Psoas muscle (tissue), 8 donors: ENCODE measurements at regions of chr3 and their contacts with region 1.

Region 1: GRCh38 chr3:187738331-187739093 is 6.8 kb downstream of the BCL6 start:
- DNase-seq: peak; percentile 85 to 91
- ATAC-seq: peak; percentile 50 to 56 (median 54)
- H3K4me3 ChIP-seq: peak overlapping the region; percentile 93
- H3K27ac ChIP-seq: peak overlapping the region; percentile 100
- H3K4me1 ChIP-seq: peaks cover 28% of the 10 kb centered on the region
- H3K27me3 ChIP-seq: no peaks in the 10 kb centered on the region
- CTCF ChIP-seq: peak; percentile 64

Region 2: GRCh38 chr3:188006726-188007393 is 268.3 kb after region 1 on chr3:
- intact Hi-C with region 1: loop called in 1 of 2 experiments (anchors 5 kb)
- DNase-seq: peak; percentile 73 to 94
- ATAC-seq: peak; percentile 95 to 97 (median 96)
- H3K4me3 ChIP-seq: peak overlapping the region; percentile 50
- H3K27ac ChIP-seq: peak overlapping the region; percentile 88
- H3K4me1 ChIP-seq: peaks cover 9% of the 10 kb centered on the region
- H3K27me3 ChIP-seq: no peaks in the 10 kb centered on the region
- CTCF ChIP-seq: no peak

Region 3: GRCh38 chr3:188154014-188154808 is 415.7 kb after region 1 on chr3 and contains the start of gene LPP:
- intact Hi-C with region 1: loop called in 1 of 2 experiments (anchors 5 kb)
- DNase-seq: peak; percentile 81 to 90
- ATAC-seq: peak; percentile 78 to 83 (median 80)
- H3K4me3 ChIP-seq: peak within 1 kb of the TSS; percentile 80
- H3K27ac ChIP-seq: peak within 1 kb of the TSS; percentile 91
- H3K4me1 ChIP-seq: peaks cover 30% of the 10 kb centered on the region
- H3K27me3 ChIP-seq: no peaks in the 10 kb centered on the region
- CTCF ChIP-seq: no peak
- total RNA-seq, gene LPP: 42.8 to 80.3 (median 58.3) TPM

Region 4: GRCh38 chr3:188262913-188263683 is 524.6 kb after region 1 on chr3:
- intact Hi-C with region 1: loop called (anchors 2 kb)
- DNase-seq: peak in 1 of 2 donors; percentile 74
- ATAC-seq: peak; percentile 41 to 67 (median 56)
- H3K4me3 ChIP-seq: no peak overlapping the region
- H3K27ac ChIP-seq: peak overlapping the region; percentile 98
- H3K4me1 ChIP-seq: peaks cover 75% of the 10 kb centered on the region
- H3K27me3 ChIP-seq: no peaks in the 10 kb centered on the region
- CTCF ChIP-seq: no peak

Region 5: DNA sequence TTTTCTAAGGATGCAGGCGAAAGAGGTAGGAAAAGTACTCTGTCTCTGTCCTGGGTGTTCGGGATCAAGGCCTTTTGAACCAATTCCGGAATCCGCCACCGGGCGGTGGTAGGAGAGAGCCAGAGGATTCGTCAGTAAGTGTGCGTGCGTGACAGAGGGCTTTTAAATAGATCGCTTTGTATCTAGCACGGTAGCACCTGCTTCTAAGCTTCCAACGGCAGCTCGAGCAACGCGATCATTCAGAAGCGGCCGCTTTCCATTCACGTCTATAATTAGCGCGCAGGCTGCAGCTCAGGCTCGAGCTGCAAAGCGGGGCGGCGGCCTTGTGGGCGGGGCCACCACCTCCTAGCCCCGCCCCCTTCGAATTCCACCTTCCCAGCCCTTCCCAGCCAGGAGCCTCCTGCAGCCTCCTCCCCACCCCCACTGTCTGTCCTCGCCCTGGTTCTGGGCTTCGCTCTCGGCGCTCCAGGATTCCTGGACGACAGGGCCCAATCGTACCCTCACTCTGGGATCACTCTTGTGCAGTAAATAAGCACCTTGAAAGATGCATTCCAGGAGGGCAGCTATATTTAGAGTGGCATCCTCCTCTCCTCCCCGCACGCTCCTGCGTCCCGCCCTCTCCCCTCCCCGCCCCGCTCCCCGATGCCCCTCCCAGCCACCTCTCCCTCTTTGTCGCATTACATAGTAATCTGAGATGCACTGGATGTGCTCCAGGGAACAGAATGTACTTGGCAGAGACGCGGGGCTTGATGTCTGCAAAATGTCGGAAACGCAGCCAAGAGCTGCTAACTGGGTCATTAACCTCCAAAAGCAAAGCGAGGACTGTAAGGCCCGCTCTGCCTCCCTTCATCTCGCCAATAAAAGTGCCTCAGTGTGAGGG is 1209.1 kb after region 1 on chr3:
- intact Hi-C with region 1: loop called (anchors 2 kb)
- DNase-seq: peak; percentile 93 to 96
- ATAC-seq: peak; percentile 85 to 87 (median 86)
- H3K4me3 ChIP-seq: peak overlapping the region; percentile 53
- H3K27ac ChIP-seq: peak overlapping the region; percentile 94
- H3K4me1 ChIP-seq: peaks cover 44% of the 10 kb centered on the region
- H3K27me3 ChIP-seq: no peaks in the 10 kb centered on the region
- CTCF ChIP-seq: peak; percentile 52